ENCODE measurements at regions of chr5 and their contacts with region 1.

Region 1: GRCh38 chr5:136174021-136174659 is 18.8 kb downstream of the SMIM32 start:
- DNase-seq: peak; percentile 50
- H3K4me3 ChIP-seq: no peak overlapping the region
- H3K27ac ChIP-seq: no peak overlapping the region
- H3K4me1 ChIP-seq: no peaks in the 10 kb centered on the region
- H3K27me3 ChIP-seq: no peaks in the 10 kb centered on the region
- CTCF ChIP-seq: peak; percentile 71 to 76

Region 2: GRCh38 chr5:135944967-135945560 is 229.1 kb before region 1 on chr5:
- CTCF ChIA-PET with region 1: no interaction called
- dilution Hi-C with region 1: no loop called
- in situ Hi-C with region 1: no loop called
- intact Hi-C with region 1: loop called (anchors 2 kb)
- DNase-seq: peak; percentile 63
- H3K4me3 ChIP-seq: no peak overlapping the region
- H3K27ac ChIP-seq: no peak overlapping the region
- H3K4me1 ChIP-seq: no peaks in the 10 kb centered on the region
- H3K27me3 ChIP-seq: no peaks in the 10 kb centered on the region
- CTCF ChIP-seq: peak; percentile 51 to 75

Region 3: DNA sequence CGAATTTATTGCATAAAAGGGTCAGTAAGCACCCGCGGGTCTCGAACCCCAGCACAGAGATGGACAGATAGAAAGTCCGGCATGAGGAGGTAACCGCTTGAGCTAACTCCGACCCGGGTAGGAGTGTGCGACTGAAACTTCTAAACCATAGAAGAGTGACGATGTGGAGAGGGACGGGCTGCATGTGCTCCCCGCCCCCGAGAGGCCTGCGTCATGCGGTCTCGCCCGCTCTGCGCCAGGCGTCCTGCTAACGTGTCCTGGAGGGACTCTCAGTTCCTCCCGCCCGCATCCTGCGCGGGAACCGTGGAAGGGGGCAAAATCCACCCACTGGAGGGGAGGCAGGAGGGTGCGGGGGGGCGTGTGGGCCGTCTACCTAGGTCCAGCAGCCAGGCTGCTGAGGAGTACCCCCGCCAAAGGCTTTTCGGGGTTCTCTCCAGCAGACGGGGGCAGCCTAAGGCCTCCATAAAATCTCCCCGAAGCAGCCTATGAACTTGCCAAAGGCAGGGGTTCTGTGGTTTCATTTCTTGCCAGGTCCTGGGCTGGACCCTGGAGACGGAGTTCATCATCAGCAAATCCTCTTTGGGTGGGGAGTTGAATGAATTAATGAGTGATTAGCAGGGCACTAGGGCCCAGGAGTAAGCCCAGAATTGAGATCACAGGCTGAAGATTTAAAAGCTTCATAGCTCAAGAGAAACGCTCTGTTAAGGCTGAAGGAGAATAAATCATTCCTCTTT is 93.5 kb before region 1 on chr5:
- CTCF ChIA-PET with region 1: no interaction called
- dilution Hi-C with region 1: no loop called
- in situ Hi-C with region 1: no loop called
- intact Hi-C with region 1: loop called (anchors 1 kb)
- DNase-seq: peak; percentile 95
- H3K4me3 ChIP-seq: peak overlapping the region; percentile 38 to 53 (median 48)
- H3K27ac ChIP-seq: peak overlapping the region; percentile 55
- H3K4me1 ChIP-seq: peaks cover 11% of the 10 kb centered on the region
- H3K27me3 ChIP-seq: no peaks in the 10 kb centered on the region
- CTCF ChIP-seq: no peak

Region 4: DNA sequence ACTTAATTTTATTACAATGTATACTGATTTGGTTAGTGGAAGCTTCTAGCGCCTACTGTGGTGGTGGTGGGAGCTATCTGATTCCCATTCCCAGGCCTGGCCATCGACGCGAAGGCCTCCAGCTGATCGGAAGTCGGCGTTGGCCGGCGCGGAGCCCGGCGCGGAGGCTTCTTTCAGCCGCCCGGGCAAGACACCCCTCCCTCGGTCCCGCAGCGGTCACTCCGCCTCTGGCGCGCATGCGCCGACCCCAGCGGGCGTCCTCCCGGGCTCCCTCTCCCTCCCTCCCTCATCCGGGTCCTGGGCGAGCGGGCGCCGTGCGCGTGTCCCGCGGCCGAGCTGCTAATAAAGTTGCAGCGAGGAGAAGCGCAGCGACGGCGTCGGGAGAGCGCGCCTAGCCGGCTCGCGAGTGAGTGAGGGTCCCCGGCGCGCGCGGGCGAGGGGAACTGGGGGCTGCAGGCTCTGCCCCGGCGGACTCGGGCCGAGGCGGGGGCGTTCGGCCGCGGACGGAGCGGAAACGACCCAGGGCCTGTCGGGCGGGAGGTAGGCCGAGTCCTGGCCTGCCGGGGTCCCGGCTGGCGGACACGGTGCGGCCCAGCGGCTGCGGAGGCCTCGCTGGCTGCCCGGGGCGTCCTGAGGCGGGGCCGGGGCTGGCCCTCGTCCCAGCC is 41.5 kb before region 1 on chr5 and contains the start of gene SMAD5:
- CTCF ChIA-PET with region 1: no interaction called
- dilution Hi-C with region 1: no loop called
- in situ Hi-C with region 1: no loop called
- intact Hi-C with region 1: loop called (anchors 2 kb)
- DNase-seq: peak; percentile 93
- H3K4me3 ChIP-seq: peak within 1 kb of the TSS; percentile 83 to 90 (median 84)
- H3K27ac ChIP-seq: peak within 1 kb of the TSS; percentile 85
- H3K4me1 ChIP-seq: peaks cover 23% of the 10 kb centered on the region
- H3K27me3 ChIP-seq: no peaks in the 10 kb centered on the region
- CTCF ChIP-seq: no peak
- total RNA-seq, gene SMAD5: 66.8 to 84.2 TPM

Region 5: DNA sequence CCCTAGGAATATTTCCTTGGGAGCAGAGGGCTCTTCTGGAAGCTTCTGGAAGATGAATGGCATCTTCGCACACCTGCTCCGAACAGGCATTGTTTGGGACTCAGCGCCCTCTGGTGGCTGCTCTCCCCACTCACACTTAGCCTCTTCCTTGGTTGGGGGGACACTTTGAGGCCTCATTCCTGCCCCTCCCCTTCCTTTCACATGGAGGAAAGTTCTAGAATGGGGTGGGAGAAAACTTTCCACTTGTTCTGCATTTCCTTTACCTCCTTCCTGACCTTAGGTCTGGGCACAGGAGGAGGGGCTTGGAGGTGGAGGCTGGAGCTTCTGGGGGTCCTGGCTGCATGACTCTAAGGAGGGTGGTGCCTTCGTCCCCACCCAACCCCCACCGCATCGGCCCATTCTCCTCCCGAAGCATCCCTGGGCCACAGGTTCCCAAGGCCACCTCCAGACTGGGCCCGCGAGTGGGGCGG is 38.1 kb after region 1 on chr5:
- CTCF ChIA-PET with region 1: no interaction called
- dilution Hi-C with region 1: no loop called
- in situ Hi-C with region 1: no loop called
- intact Hi-C with region 1: loop called (anchors 1 kb)
- DNase-seq: no peak
- H3K4me3 ChIP-seq: no peak overlapping the region
- H3K27ac ChIP-seq: no peak overlapping the region
- H3K4me1 ChIP-seq: no peaks in the 10 kb centered on the region
- H3K27me3 ChIP-seq: no peaks in the 10 kb centered on the region
- CTCF ChIP-seq: peak; percentile 79 to 90

Region 6: DNA sequence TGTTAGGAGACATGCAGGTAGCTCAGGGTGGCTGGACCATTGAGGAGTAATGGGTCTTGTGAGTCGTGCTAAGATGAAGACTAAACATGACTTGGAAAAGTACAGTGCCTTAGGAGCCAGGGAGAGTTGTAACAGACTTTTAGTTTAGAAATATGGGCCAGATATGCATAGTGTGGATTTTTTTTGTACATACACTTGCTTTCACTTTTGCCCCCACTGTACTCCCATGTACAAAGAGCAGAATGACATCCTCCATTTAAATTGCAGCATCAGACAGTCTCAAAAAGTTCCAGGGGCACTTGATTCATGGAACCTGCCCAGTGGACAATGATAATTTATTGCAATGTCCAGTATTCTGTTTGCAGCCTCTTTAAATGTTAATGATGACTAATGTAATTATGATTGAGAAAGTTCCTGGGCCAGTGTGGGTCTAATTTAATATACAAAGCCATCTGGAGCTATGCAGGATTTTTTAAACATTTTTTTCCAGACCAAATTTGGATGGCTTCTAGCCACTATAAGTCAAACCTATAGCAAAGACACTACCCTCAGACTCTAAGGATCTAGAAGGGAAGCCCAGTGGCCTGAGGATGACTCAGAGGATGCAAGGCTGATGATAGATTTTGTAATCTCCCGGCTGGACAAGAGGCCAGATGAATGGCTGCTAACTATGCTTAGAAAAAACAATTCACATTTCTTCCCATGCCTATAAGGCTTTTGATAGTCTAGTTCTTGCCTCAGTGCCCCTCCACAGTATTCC is 111.1 kb after region 1 on chr5:
- CTCF ChIA-PET with region 1: no interaction called
- dilution Hi-C with region 1: no loop called
- in situ Hi-C with region 1: no loop called
- intact Hi-C with region 1: no loop called
- DNase-seq: no peak
- H3K4me3 ChIP-seq: no peak overlapping the region
- H3K27ac ChIP-seq: no peak overlapping the region
- H3K4me1 ChIP-seq: no peaks in the 10 kb centered on the region
- H3K27me3 ChIP-seq: peaks cover 2% of the 10 kb centered on the region
- CTCF ChIP-seq: no peak

Region 7: GRCh38 chr5:136308212-136308795 is 134.2 kb after region 1 on chr5:
- CTCF ChIA-PET with region 1: no interaction called
- dilution Hi-C with region 1: no loop called
- in situ Hi-C with region 1: no loop called
- intact Hi-C with region 1: no loop called
- DNase-seq: no peak
- H3K4me3 ChIP-seq: no peak overlapping the region
- H3K27ac ChIP-seq: no peak overlapping the region
- H3K4me1 ChIP-seq: no peaks in the 10 kb centered on the region
- H3K27me3 ChIP-seq: no peaks in the 10 kb centered on the region
- CTCF ChIP-seq: peak in 1 of 2 donors; percentile 27

Region 8: GRCh38 chr5:136769900-136770684 is 596.0 kb after region 1 on chr5:
- CTCF ChIA-PET with region 1: no interaction called
- dilution Hi-C with region 1: no loop called
- in situ Hi-C with region 1: no loop called
- intact Hi-C with region 1: loop called (anchors 5 kb)
- DNase-seq: peak; percentile 45
- H3K4me3 ChIP-seq: no peak overlapping the region
- H3K27ac ChIP-seq: no peak overlapping the region
- H3K4me1 ChIP-seq: no peaks in the 10 kb centered on the region
- H3K27me3 ChIP-seq: peaks cover 2% of the 10 kb centered on the region
- CTCF ChIP-seq: peak; percentile 93 to 95